IMR-90 (cell line): ENCODE measurements at regions of chr9 and their contacts with region 1.

Region 1: GRCh38 chr9:26744191-26744965 is 148.2 kb downstream of the CAAP1 start:
- DNase-seq: peak; percentile 38
- ATAC-seq: no peak
- H3K4me3 ChIP-seq: no peak overlapping the region
- H3K27ac ChIP-seq: no peak overlapping the region
- H3K4me1 ChIP-seq: no peaks in the 10 kb centered on the region
- H3K27me3 ChIP-seq: no peaks in the 10 kb centered on the region; the same call in 1 of the 2 replicates
- CTCF ChIP-seq: peak; percentile 70
- POLR2A ChIP-seq: no peak
- RAD21 ChIP-seq: peak; percentile 54

Region 2: DNA sequence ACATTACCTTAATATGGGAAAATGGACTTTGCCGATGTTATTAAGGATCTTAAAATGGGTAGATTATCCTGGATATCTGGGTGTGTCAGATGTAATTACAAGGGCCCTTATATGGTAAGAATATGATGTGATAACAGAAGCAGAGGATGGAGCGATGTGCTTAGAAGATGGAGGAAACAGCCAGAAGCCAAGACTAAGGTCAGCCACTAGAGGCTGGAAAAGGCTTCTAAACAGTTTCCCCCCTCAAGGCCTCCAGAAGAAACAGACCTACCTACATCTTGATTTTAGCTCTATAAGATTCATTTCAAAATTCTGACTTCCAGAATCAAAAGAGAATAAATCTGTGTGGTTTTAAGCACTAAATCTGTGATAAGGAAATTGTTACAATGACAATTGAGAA is 16.3 kb after region 1 on chr9:
- CTCF ChIA-PET with region 1: no interaction called
- POLR2A ChIA-PET with region 1: no interaction called
- dilution Hi-C with region 1: no loop called
- in situ Hi-C with region 1: no loop called
- intact Hi-C with region 1: no loop called
- DNase-seq: no peak
- ATAC-seq: no peak
- H3K4me3 ChIP-seq: no peak overlapping the region
- H3K27ac ChIP-seq: no peak overlapping the region
- H3K4me1 ChIP-seq: no peaks in the 10 kb centered on the region
- H3K27me3 ChIP-seq: no peaks in the 10 kb centered on the region; the same call in 1 of the 2 replicates
- CTCF ChIP-seq: no peak
- POLR2A ChIP-seq: no peak
- RAD21 ChIP-seq: no peak

Region 3: DNA sequence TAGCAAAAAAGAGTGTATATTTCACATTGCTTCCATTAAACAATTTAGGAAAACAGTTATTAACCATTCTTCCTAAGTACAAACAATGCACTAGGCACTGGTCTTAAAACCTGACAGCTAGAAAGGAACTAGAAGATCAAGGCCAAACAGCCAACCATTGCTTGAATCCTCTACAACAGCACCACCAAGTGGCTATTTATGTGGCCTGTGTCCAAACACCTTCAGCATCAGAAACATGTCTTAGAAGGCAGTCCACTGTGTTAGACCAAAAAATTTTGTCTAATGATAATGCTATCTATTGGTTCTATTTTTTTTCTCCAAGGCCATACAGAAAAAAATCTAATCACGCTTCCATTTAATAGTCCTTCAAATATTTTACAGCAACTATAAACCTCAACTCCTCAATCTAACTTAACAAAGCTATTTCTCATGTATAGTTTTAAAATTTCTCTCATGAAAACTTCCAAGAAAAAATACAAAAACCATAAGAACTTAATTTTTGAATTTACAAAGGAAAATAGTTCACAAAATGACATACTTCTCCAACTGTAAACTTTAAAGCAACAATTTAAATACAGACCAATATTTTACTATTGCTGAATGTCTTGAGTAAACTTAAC is 112.1 kb after region 1 on chr9:
- CTCF ChIA-PET with region 1: no interaction called
- POLR2A ChIA-PET with region 1: no interaction called
- dilution Hi-C with region 1: no loop called
- in situ Hi-C with region 1: loop called (anchors 10 kb)
- intact Hi-C with region 1: no loop called
- DNase-seq: peak; percentile 38
- ATAC-seq: no peak
- H3K4me3 ChIP-seq: no peak overlapping the region
- H3K27ac ChIP-seq: no peak overlapping the region
- H3K4me1 ChIP-seq: no peaks in the 10 kb centered on the region
- H3K27me3 ChIP-seq: no peaks in the 10 kb centered on the region
- CTCF ChIP-seq: peak; percentile 33
- POLR2A ChIP-seq: no peak
- RAD21 ChIP-seq: peak; percentile 45

Region 4: GRCh38 chr9:26863074-26863473 is 118.7 kb after region 1 on chr9:
- CTCF ChIA-PET with region 1: no interaction called
- POLR2A ChIA-PET with region 1: no interaction called
- dilution Hi-C with region 1: no loop called
- in situ Hi-C with region 1: loop called (anchors 10 kb)
- intact Hi-C with region 1: loop called (anchors 2 kb)
- DNase-seq: peak; percentile 2
- ATAC-seq: peak; percentile 53; the same call in 1 of the 2 replicates
- H3K4me3 ChIP-seq: no peak overlapping the region
- H3K27ac ChIP-seq: no peak overlapping the region
- H3K4me1 ChIP-seq: no peaks in the 10 kb centered on the region
- H3K27me3 ChIP-seq: no peaks in the 10 kb centered on the region
- CTCF ChIP-seq: peak; percentile 28; the same call in 1 of the 2 replicates
- POLR2A ChIP-seq: no peak
- RAD21 ChIP-seq: peak; percentile 23; the same call in 1 of the 2 replicates

Region 5: DNA sequence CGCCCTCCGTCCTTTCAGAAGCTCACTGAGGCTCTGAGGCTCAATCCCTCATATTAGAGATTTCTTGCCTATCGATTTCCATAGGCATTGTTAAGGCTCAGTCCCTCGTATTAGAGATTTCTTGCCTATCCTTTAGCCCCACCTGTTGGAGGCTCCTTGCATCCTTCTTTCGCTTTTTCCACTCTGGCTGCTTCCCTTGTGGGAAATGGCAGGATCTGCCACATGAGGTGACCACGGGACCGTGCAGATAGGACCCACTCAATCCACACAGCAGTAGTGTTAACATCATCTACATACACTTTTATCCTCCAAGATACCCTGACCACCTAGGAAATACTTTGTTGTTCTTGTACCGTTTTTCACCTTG is 231.3 kb after region 1 on chr9:
- CTCF ChIA-PET with region 1: no interaction called
- POLR2A ChIA-PET with region 1: no interaction called
- dilution Hi-C with region 1: no loop called
- in situ Hi-C with region 1: loop called (anchors 25 kb)
- intact Hi-C with region 1: loop called (anchors 5 kb)
- DNase-seq: peak; percentile 46
- ATAC-seq: no peak; the same call in 1 of the 2 replicates
- H3K4me3 ChIP-seq: no peak overlapping the region
- H3K27ac ChIP-seq: peak overlapping the region; percentile 79; the same call in 1 of the 2 replicates
- H3K4me1 ChIP-seq: peaks cover 2% of the 10 kb centered on the region; the same call in 1 of the 2 replicates
- H3K27me3 ChIP-seq: no peaks in the 10 kb centered on the region
- CTCF ChIP-seq: peak; percentile 46
- POLR2A ChIP-seq: no peak
- RAD21 ChIP-seq: peak; percentile 61

Region 6: DNA sequence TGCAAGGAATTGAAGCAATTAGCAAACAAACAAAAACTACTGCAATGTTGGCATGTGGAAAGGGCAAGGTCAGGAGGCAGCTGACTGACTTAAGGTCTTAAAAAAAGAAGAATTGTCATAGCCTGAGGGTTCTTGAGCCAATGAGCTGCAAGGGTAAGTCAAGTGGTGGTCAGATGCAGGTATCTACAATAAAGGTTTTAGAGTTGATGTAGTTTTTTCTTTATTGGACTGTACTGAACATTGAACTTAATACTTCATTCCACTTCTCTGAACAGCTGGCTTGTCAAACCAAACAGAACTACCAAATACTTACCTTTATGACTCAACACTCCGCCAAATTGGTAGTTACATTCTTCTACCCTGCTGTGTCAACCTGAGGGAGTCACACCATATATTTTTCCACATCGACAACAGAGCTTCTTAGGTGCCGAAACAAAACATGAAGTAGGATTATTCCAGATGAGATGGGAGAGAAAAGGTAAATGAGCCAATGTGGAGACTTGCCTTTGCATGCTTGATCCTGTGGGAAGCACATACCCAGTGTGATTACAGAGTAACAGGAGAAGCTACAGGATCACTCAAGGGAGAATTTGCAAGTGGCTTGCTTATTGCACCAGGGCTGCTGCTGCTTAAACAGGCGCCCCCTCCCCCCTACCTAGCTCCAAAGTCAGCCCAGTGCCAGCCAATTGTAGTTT is 517.3 kb after region 1 on chr9:
- CTCF ChIA-PET with region 1: no interaction called
- POLR2A ChIA-PET with region 1: no interaction called
- dilution Hi-C with region 1: no loop called
- in situ Hi-C with region 1: no loop called
- intact Hi-C with region 1: no loop called
- DNase-seq: peak; percentile 17
- ATAC-seq: peak; percentile 64; the same call in 1 of the 2 replicates
- H3K4me3 ChIP-seq: no peak overlapping the region
- H3K27ac ChIP-seq: no peak overlapping the region
- H3K4me1 ChIP-seq: no peaks in the 10 kb centered on the region
- H3K27me3 ChIP-seq: peaks cover 11% of the 10 kb centered on the region
- CTCF ChIP-seq: no peak
- POLR2A ChIP-seq: no peak
- RAD21 ChIP-seq: no peak